T-cell (primary cell): ENCODE measurements at regions of chr2 and their contacts with region 1.

Region 1: DNA sequence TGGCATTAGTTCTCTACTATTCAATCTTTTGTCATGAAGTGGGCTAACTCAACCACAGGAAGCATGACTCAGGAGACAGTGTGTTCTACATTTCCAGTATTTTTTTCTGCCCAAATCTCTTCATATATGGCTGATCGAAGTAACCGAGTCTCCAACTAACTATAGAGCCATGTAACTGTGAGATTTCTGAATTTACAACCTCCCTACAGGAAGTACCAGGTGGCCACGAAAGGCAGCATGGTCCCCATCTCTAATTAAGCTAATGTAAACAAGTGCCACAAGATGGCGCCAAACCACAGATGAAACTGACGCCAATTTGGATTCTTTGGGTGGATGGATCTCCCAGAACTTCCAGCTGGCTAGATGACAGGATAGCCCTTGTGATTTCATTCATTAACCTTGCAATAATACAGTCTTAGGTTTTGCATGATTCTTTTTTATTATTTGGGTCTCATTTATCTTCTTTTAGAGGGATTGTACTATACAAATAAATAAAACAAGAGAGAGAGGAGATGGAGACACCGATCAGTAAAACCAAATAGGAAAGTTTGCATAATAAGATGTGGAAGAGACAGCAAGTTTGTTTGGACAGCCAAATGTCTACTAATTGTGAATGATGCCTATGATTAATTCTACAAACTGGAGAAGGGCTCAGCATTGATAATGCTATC is 18.3 kb upstream of the ARHGAP15 start:
- DNase-seq: peak; percentile 13 to 89 (median 56)
- ATAC-seq: peak; percentile 78 to 87 (median 83)
- H3K4me3 ChIP-seq: no peak overlapping the region
- H3K4me3 Mint-ChIP-seq: peak overlapping the region; percentile 9 to 49 (median 20)
- H3K27ac ChIP-seq: peak overlapping the region; percentile 31
- H3K27ac Mint-ChIP-seq: peak overlapping the region; percentile 85 to 91
- H3K4me1 ChIP-seq: peaks cover 6 to 10% of the 10 kb centered on the region in 2 experiments
- H3K4me1 Mint-ChIP-seq: peaks cover 28 to 31% (median 29%) of the 10 kb centered on the region in 3 donors
- H3K27me3 ChIP-seq: no peaks in the 10 kb centered on the region
- H3K27me3 Mint-ChIP-seq: peaks cover 0 to 2% of the 10 kb centered on the region in 2 donors

Region 2: GRCh38 chr2:143155661-143156060 is 44.8 kb after region 1 on chr2:
- CTCF ChIA-PET with region 1: interaction called in 1 of 2 experiments, 68 read pairs
- POLR2A ChIA-PET with region 1: interaction called in 1 of 2 experiments, 10 read pairs
- DNase-seq: no peak
- ATAC-seq: no peak
- H3K4me3 ChIP-seq: no peak overlapping the region
- H3K4me3 Mint-ChIP-seq: peak overlapping the region in 1 of 3 donors; percentile 13
- H3K27ac ChIP-seq: no peak overlapping the region
- H3K27ac Mint-ChIP-seq: peak overlapping the region; percentile 51 to 80
- H3K4me1 ChIP-seq: peaks cover 25 to 47% of the 10 kb centered on the region in 2 experiments
- H3K4me1 Mint-ChIP-seq: peaks cover 86 to 91% (median 86%) of the 10 kb centered on the region in 3 donors
- H3K27me3 ChIP-seq: no peaks in the 10 kb centered on the region
- H3K27me3 Mint-ChIP-seq: no peaks in the 10 kb centered on the region

Region 3: GRCh38 chr2:143205106-143205764 is 94.3 kb after region 1 on chr2:
- CTCF ChIA-PET with region 1: interaction called, 9 to 25 read pairs
- POLR2A ChIA-PET with region 1: interaction called in 1 of 2 experiments, 4 read pairs
- DNase-seq: peak in 1 of 35 experiments; percentile 66
- ATAC-seq: peak; percentile 77 to 83 (median 82)
- H3K4me3 ChIP-seq: no peak overlapping the region
- H3K4me3 Mint-ChIP-seq: peak overlapping the region in 1 of 3 donors; percentile 2
- H3K27ac ChIP-seq: peak overlapping the region; percentile 53
- H3K27ac Mint-ChIP-seq: peak overlapping the region; percentile 52 to 91
- H3K4me1 ChIP-seq: peaks cover 10 to 14% of the 10 kb centered on the region in 2 experiments
- H3K4me1 Mint-ChIP-seq: peaks cover 69 to 76% (median 69%) of the 10 kb centered on the region in 3 donors
- H3K27me3 ChIP-seq: no peaks in the 10 kb centered on the region
- H3K27me3 Mint-ChIP-seq: no peaks in the 10 kb centered on the region

Region 4: GRCh38 chr2:143223556-143223955 is 112.7 kb after region 1 on chr2:
- CTCF ChIA-PET with region 1: interaction called, 24 to 73 read pairs
- POLR2A ChIA-PET with region 1: interaction called in 1 of 2 experiments, 11 read pairs
- DNase-seq: no peak
- ATAC-seq: no peak
- H3K4me3 ChIP-seq: no peak overlapping the region
- H3K4me3 Mint-ChIP-seq: no peak overlapping the region
- H3K27ac ChIP-seq: no peak overlapping the region
- H3K27ac Mint-ChIP-seq: peak overlapping the region; percentile 77 to 82
- H3K4me1 ChIP-seq: peaks cover 2 to 9% of the 10 kb centered on the region in 2 experiments
- H3K4me1 Mint-ChIP-seq: peaks cover 48 to 65% (median 63%) of the 10 kb centered on the region in 3 donors
- H3K27me3 ChIP-seq: no peaks in the 10 kb centered on the region
- H3K27me3 Mint-ChIP-seq: no peaks in the 10 kb centered on the region

Region 5: GRCh38 chr2:143284087-143284675 is 173.3 kb after region 1 on chr2:
- CTCF ChIA-PET with region 1: interaction called, 8 to 11 read pairs
- POLR2A ChIA-PET with region 1: no interaction called
- DNase-seq: peak in 24 of 35 experiments; percentile 3 to 71 (median 12)
- ATAC-seq: peak; percentile 66 to 75 (median 70)
- H3K4me3 ChIP-seq: no peak overlapping the region
- H3K4me3 Mint-ChIP-seq: no peak overlapping the region
- H3K27ac ChIP-seq: no peak overlapping the region
- H3K27ac Mint-ChIP-seq: peak overlapping the region in 1 of 2 donors; percentile 0
- H3K4me1 ChIP-seq: no peaks in the 10 kb centered on the region
- H3K4me1 Mint-ChIP-seq: peaks cover 51 to 69% (median 57%) of the 10 kb centered on the region in 3 donors
- H3K27me3 ChIP-seq: no peaks in the 10 kb centered on the region
- H3K27me3 Mint-ChIP-seq: no peaks in the 10 kb centered on the region